HepG2 (cell line): ENCODE measurements at regions of chr12 and their contacts with region 1.

Region 1: DNA sequence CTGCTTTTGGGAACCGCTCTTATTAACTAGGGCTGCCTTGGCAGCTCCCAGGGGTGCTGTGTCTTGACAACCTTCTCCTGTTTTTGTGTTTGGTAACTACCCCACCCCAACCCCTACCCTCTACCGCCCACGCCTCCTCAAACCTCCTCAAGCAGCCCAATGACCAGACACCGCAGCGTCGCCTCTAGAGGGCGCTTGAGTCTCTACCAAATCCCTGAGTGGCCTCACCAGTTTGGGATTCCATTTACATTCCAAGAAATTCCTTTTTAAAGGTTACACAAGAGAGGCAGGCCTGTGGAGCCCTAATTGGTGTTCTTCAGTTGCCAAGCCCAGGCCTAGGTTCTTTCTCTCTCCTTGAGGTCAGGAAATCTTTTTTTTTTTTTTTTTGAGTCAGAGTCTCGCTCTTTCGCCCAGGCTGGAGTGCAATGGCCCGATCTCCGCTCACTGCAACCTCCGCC is 72.3 kb upstream of the USP44 start:
- DNase-seq: peak; percentile 73
- ATAC-seq: peak; percentile 96
- H3K4me3 ChIP-seq: no peak overlapping the region
- H3K27ac ChIP-seq: no peak overlapping the region
- H3K4me1 ChIP-seq: peaks cover 14% of the 10 kb centered on the region
- H3K27me3 ChIP-seq: no peaks in the 10 kb centered on the region
- CTCF ChIP-seq: peak; percentile 85
- EP300 ChIP-seq: no peak
- POLR2A ChIP-seq: no peak
- RAD21 ChIP-seq: peak; percentile 48; the same call in 1 of the 2 replicates

Region 2: GRCh38 chr12:95717974-95718431 is 94.4 kb after region 1 on chr12:
- CTCF ChIA-PET with region 1: no interaction called
- POLR2A ChIA-PET with region 1: no interaction called
- in situ Hi-C with region 1: no loop called
- intact Hi-C with region 1: loop called (anchors 10 kb)
- DNase-seq: no peak
- ATAC-seq: no peak
- H3K4me3 ChIP-seq: no peak overlapping the region
- H3K27ac ChIP-seq: no peak overlapping the region
- H3K4me1 ChIP-seq: peaks cover 6% of the 10 kb centered on the region; the same call in 1 of the 2 replicates
- H3K27me3 ChIP-seq: no peaks in the 10 kb centered on the region
- CTCF ChIP-seq: no peak
- EP300 ChIP-seq: no peak
- POLR2A ChIP-seq: no peak
- RAD21 ChIP-seq: no peak

Region 3: GRCh38 chr12:95805864-95806671 is 182.5 kb after region 1 on chr12:
- CTCF ChIA-PET with region 1: no interaction called
- POLR2A ChIA-PET with region 1: no interaction called
- in situ Hi-C with region 1: loop called (anchors 10 kb)
- intact Hi-C with region 1: no loop called
- DNase-seq: no peak
- ATAC-seq: no peak
- H3K4me3 ChIP-seq: no peak overlapping the region
- H3K27ac ChIP-seq: no peak overlapping the region
- H3K4me1 ChIP-seq: peaks cover 47% of the 10 kb centered on the region
- H3K27me3 ChIP-seq: no peaks in the 10 kb centered on the region
- CTCF ChIP-seq: no peak
- EP300 ChIP-seq: no peak
- POLR2A ChIP-seq: no peak
- RAD21 ChIP-seq: no peak

Region 4: GRCh38 chr12:95848575-95849388 is 225.2 kb after region 1 on chr12:
- CTCF ChIA-PET with region 1: no interaction called
- POLR2A ChIA-PET with region 1: no interaction called
- in situ Hi-C with region 1: no loop called
- intact Hi-C with region 1: loop called (anchors 1 kb)
- DNase-seq: peak; percentile 51
- ATAC-seq: peak; percentile 89
- H3K4me3 ChIP-seq: peak overlapping the region; percentile 31 to 48 (median 33); a peak in 5 of 6 replicates
- H3K27ac ChIP-seq: no peak overlapping the region
- H3K4me1 ChIP-seq: peaks cover 7% of the 10 kb centered on the region
- H3K27me3 ChIP-seq: peaks cover 0 to 4% of the 10 kb centered on the region in 2 experiments; a peak in 1 of 5 replicates
- CTCF ChIP-seq: peak; percentile 68
- EP300 ChIP-seq: no peak
- POLR2A ChIP-seq: no peak
- RAD21 ChIP-seq: peak; percentile 57; the same call in 1 of the 2 replicates

Region 5: DNA sequence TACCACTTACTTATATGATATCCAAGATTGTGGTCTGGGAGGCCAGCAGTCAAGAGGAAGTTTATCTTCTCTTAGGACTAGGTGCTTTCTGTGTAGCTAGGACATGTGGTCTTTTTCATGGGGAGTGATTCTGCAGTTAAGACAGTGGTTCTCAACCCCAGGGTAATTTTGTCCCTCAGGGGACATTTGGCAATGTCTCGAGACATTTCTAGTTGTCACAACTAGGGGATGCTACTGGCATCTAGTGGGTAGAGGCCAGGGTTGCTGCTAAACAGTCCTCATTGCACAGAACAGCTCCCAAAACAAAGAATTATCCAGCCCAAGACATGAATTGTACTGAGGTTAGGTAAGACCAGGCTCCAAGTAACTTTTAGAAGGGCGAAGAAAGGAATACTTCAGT is 339.5 kb after region 1 on chr12:
- CTCF ChIA-PET with region 1: no interaction called
- POLR2A ChIA-PET with region 1: no interaction called
- in situ Hi-C with region 1: no loop called
- intact Hi-C with region 1: no loop called
- DNase-seq: no peak
- ATAC-seq: no peak
- H3K4me3 ChIP-seq: no peak overlapping the region
- H3K27ac ChIP-seq: no peak overlapping the region
- H3K4me1 ChIP-seq: peaks cover 51% of the 10 kb centered on the region
- H3K27me3 ChIP-seq: no peaks in the 10 kb centered on the region
- CTCF ChIP-seq: peak; percentile 47
- EP300 ChIP-seq: no peak
- POLR2A ChIP-seq: no peak
- RAD21 ChIP-seq: peak; percentile 34; the same call in 1 of the 2 replicates